HepG2 (cell line): ENCODE measurements at regions of chr18 and their contacts with region 1.

Region 1: GRCh38 chr18:8890957-8891464 is 185.7 kb downstream of the MTCL1 start:
- DNase-seq: peak; percentile 39
- ATAC-seq: peak; percentile 54; the same call in 1 of the 3 replicates
- H3K4me3 ChIP-seq: no peak overlapping the region
- H3K27ac ChIP-seq: no peak overlapping the region
- H3K4me1 ChIP-seq: peaks cover 10% of the 10 kb centered on the region
- H3K27me3 ChIP-seq: no peaks in the 10 kb centered on the region
- CTCF ChIP-seq: no peak
- EP300 ChIP-seq: no peak
- POLR2A ChIP-seq: no peak
- RAD21 ChIP-seq: no peak

Region 2: GRCh38 chr18:10006311-10006893 is 1115.4 kb after region 1 on chr18:
- CTCF ChIA-PET with region 1: no interaction called
- POLR2A ChIA-PET with region 1: no interaction called
- in situ Hi-C with region 1: no loop called
- intact Hi-C with region 1: loop called (anchors 10 kb)
- DNase-seq: no peak
- ATAC-seq: no peak
- H3K4me3 ChIP-seq: no peak overlapping the region
- H3K27ac ChIP-seq: no peak overlapping the region
- H3K4me1 ChIP-seq: no peaks in the 10 kb centered on the region
- H3K27me3 ChIP-seq: peaks cover 0 to 7% of the 10 kb centered on the region in 2 experiments; a peak in 1 of 5 replicates
- CTCF ChIP-seq: 0 out of 2 replicates have a peak, but pooled peaks have one; percentile 17
- EP300 ChIP-seq: no peak
- POLR2A ChIP-seq: no peak
- RAD21 ChIP-seq: no peak